Mucosa of descending colon (tissue), 3 donors: ENCODE measurements at regions of chr11 and their contacts with region 1.

Region 1: DNA sequence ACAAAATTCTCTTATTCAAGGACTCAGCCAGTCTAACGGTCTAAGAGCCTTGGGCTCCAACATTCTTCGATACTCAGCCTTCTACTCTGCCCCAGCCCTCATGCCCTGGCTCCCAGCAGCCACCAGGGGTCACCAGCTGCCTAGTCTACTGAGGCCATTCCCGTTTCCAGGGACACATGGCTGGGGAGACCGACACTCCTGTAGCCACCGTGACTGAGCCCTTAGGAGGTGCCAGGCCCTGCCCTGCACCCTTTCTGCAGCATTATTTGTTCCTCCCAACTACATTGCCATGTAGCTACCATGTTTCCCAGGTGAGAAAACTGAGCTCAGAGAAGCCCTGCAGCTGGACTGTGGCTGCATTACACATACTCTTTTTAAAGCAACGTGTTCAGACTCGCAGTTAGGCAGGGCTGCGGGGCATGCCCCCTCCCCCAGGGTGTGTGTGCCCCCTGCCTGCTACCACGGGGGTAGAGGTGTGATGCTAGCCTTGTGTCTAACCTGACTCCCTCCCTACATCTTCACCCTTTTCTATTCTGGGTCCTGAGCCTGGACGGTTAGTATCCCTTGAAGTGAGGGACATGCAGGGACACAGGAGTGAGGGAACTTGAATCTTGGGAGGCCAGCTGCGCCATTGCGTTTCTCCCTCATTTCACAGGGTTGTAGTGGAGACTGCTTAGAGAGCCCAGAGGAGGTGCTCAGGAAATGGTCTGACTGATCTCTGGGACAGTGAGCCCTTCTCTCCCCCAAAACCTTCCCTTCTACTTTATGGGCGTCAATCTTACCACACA is 17.5 kb downstream of the ATG16L2 start:
- DNase-seq: peak; percentile 77 to 89 (median 85)
- ATAC-seq: peak; percentile 90
- H3K4me3 ChIP-seq: no peak overlapping the region
- H3K4me1 ChIP-seq: peaks cover 8% of the 10 kb centered on the region
- CTCF ChIP-seq: peak; percentile 85

Region 2: GRCh38 chr11:72875736-72876135 is 44.0 kb after region 1 on chr11:
- intact Hi-C with region 1: no loop called
- DNase-seq: no peak
- ATAC-seq: no peak
- H3K4me3 ChIP-seq: no peak overlapping the region
- H3K4me1 ChIP-seq: no peaks in the 10 kb centered on the region
- CTCF ChIP-seq: no peak

Region 3: DNA sequence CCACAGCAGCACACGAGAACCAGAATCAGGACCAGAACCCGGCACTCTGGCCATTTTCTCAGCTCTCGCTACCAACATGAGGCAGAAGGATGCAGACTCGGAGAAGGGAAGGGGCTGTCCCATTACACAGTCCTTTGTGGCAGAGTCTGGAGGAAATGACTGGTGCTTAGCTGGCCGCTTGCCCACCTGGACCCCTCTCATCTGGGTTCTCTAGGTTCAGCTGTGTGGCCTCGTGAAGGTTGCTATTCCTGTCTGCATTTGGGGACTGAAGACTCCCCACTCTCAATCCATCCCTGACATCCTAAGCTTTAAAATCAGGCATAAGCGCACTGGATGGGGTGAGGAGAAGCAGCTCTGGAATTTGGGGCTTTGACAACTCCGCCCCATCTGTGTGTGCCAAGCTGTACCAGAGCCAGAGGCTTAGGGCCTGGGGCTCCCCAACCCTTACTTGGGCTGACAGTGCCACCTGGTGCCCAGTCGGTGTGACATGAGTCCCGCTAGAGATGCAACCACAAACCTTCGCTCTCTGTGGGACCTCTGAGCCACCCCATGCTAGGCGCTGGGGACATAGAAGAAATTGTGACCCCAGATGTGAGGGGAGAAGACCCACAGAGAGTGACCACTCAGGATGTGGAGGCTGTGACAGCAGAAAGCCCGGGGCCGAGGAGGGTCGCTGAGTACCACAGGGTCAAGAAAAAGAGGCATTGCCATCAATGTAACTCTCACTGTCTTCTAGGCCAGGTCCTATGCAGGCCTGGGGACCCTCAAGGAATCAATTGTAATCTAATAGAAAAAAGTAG is 346.3 kb after region 1 on chr11:
- intact Hi-C with region 1: loop called (anchors 2 to 5 kb)
- DNase-seq: peak; percentile 84 to 86 (median 84)
- ATAC-seq: peak; percentile 75
- H3K4me3 ChIP-seq: no peak overlapping the region
- H3K4me1 ChIP-seq: peaks cover 15% of the 10 kb centered on the region
- CTCF ChIP-seq: no peak

Region 4: DNA sequence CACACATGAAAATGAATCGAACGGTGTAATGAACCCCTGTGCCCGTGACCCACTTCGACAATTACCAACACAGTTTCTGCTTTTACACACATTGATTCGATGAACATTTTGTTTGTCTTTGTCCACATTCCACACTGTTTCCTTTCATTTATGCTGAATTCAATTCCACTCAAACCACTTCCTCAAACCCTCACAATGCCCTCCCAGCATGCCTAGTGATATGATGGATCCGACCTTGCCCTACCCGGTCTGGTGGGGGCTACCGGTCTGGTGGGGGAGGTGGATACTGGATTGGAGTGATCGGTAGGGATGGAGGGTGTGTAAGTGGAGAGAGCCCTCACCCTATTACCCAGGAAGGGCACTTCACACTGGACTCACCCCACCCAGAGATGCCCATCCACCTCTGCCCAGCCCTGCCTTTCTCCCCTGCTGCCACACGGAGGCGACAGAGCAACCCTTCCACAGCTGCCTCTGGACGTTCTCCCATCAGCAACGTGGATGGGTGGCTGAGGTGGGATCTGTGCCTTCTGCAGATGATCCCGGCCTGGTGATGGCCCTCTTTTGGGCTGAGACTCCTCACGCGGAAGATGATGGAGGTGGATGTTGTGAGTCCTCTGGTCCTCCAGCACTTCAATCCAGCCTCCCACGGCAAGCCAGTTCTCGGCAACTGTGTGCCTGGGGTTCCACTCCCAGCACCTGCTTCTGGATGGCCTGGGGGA is 353.4 kb after region 1 on chr11:
- intact Hi-C with region 1: loop called in 1 of 2 experiments (anchors 5 kb)
- DNase-seq: peak; percentile 75 to 85 (median 80)
- ATAC-seq: peak; percentile 86
- H3K4me3 ChIP-seq: no peak overlapping the region
- H3K4me1 ChIP-seq: peaks cover 15% of the 10 kb centered on the region
- CTCF ChIP-seq: peak; percentile 74

Region 5: GRCh38 chr11:73242251-73243079 is 410.8 kb after region 1 on chr11:
- intact Hi-C with region 1: loop called in 1 of 2 experiments (anchors 2 kb)
- DNase-seq: peak; percentile 72 to 85 (median 76)
- ATAC-seq: peak; percentile 95
- H3K4me3 ChIP-seq: no peak overlapping the region
- H3K4me1 ChIP-seq: no peaks in the 10 kb centered on the region
- CTCF ChIP-seq: peak; percentile 72